ENCODE measurements at regions of chr6 and their contacts with region 1.

Region 1: DNA sequence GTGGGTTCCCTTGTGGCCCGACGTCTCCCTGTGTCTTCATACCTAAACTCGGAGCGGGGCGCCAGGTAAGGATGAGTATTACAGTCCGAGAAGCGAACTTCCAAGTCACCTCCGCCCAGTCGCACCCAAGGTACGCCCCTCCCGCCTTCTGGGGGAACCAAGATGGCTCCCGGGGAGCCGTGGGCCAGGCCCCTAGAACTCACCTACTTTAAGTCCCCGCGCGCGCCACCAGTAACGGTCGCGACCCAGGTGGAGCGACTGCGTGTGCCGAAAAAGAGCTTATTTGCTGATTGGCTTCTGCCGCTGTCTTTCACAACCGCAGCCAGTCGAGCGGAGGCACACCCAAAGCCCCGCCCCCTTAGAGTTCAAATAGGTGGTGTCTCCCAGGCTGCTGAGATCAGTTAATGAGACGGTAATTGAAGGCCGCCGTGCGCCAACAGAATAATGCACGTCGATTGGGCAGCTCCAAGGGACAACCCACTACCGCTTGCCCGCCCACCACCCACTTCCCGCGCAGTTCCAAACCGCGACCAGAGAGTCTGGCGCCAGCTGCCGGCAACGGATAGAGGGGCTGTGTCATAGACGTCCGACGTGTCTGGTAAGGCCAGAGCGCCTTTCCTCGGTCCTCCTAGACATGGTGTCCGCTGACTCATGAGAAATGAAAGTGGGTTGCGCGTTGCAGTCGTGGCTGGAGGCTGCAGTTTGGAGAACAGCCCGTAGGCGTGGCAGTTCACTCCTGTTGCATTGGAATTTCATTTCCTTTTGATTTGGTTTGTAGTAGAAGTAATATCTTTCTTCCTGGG is at the start of gene MDC1:
- DNase-seq: peak; percentile 84 to 100
- ATAC-seq: peak; percentile 83 to 87
- H3K4me3 ChIP-seq: peak within 1 kb of the TSS; percentile 63
- H3K27ac ChIP-seq: peak within 1 kb of the TSS; percentile 99 to 100
- H3K4me1 ChIP-seq: peaks cover 22% of the 10 kb centered on the region
- CTCF ChIP-seq: no peak
- EP300 ChIP-seq: no peak
- POLR2A ChIP-seq: 0 out of 2 replicates have a peak, but pooled peaks have one; percentile 32
- RAD21 ChIP-seq: no peak; a peak in 1 of 5 replicates
- polyA plus RNA-seq, gene MDC1: 8.2 and 13.3 TPM in 2 replicates

Region 2: DNA sequence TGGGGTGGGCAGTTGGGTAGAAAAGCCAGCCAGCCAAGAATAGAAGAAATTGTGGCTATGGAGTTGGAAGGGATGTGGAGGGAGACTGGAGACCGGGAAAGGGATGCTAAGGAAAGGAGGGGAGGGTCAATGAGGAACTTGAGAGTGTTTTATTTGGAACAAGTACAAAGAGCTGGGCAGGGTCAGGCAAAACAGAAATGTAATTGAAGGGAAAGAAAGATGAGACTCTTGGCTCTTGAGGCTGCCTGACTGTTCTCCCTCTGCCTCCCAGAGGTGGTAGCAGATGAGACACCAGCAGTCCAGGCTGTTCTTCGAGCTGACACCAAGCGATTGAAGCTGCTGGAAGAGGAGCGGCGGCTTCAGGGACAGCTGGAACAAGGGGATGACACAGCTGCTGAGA is 133.3 kb before region 1 on chr6:
- CTCF ChIA-PET with region 1: no interaction called
- POLR2A ChIA-PET with region 1: no interaction called
- DNase-seq: no peak
- ATAC-seq: no peak; a peak in 1 of 6 replicates
- H3K4me3 ChIP-seq: no peak overlapping the region
- H3K27ac ChIP-seq: no peak overlapping the region
- H3K4me1 ChIP-seq: no peaks in the 10 kb centered on the region
- CTCF ChIP-seq: no peak
- EP300 ChIP-seq: no peak
- POLR2A ChIP-seq: no peak
- RAD21 ChIP-seq: no peak

Region 3: GRCh38 chr6:30664994-30665767 is 52.1 kb before region 1 on chr6:
- CTCF ChIA-PET with region 1: interaction called, 539 read pairs
- POLR2A ChIA-PET with region 1: no interaction called
- DNase-seq: no peak
- ATAC-seq: no peak
- H3K4me3 ChIP-seq: no peak overlapping the region
- H3K27ac ChIP-seq: no peak overlapping the region
- H3K4me1 ChIP-seq: no peaks in the 10 kb centered on the region
- CTCF ChIP-seq: no peak
- EP300 ChIP-seq: no peak
- POLR2A ChIP-seq: no peak
- RAD21 ChIP-seq: no peak

Region 4: DNA sequence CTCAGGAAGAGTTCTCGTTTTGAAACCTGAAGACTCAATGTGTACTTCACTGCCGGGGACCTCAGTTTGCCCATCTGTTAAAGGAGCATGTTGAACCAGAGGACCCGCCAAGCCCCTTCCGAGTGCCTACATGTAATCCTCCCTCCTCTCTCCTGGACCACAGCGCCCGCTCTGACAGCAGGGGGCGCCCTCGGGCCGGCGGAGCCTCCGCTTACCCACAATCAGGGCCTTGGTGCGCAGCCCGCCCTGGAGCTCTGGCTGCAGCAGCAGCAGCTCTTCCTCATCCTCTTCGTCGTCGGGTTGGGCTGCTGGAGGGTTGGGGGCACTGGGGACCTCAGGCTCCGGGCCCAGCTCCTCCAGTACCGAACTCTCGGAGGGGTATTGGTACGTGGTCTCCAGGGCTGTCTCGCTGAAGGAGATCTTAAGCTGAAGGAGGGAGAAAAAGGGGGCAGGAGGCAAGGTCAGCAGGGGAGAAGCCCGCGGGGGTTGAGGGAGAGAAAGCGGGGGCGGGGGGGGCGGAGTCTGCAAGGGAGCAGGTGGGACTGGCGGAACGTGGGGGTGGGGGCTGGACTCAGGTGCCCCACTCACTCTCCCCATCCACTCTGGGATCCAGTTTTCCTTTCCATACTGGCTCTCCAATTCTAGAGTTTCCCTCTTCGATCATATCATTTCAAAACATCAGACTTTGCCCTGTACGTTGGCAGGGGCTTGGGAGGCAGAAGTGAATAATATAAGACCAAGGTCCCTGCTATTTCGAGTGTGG is 38.1 kb before region 1 on chr6:
- CTCF ChIA-PET with region 1: interaction called, 539 read pairs
- POLR2A ChIA-PET with region 1: interaction called, 12 read pairs
- DNase-seq: peak; percentile 67 to 76
- ATAC-seq: peak; percentile 80 to 88; a peak in 5 of 6 replicates
- H3K4me3 ChIP-seq: 0 out of 3 replicates have a peak overlapping the region, but pooled peaks have one; percentile 19
- H3K27ac ChIP-seq: peak overlapping the region; percentile 59 to 87
- H3K4me1 ChIP-seq: peaks cover 37% of the 10 kb centered on the region
- CTCF ChIP-seq: peak; percentile 85
- EP300 ChIP-seq: no peak
- POLR2A ChIP-seq: no peak
- RAD21 ChIP-seq: peak; percentile 89 to 90

Region 5: GRCh38 chr6:30730601-30731435 is 13.6 kb after region 1 on chr6:
- CTCF ChIA-PET with region 1: interaction called, 53 read pairs
- POLR2A ChIA-PET with region 1: interaction called, 3 read pairs
- DNase-seq: peak in 1 of 2 experiments; percentile 74
- ATAC-seq: peak; percentile 63 to 65
- H3K4me3 ChIP-seq: no peak overlapping the region
- H3K27ac ChIP-seq: peak overlapping the region in 1 of 2 experiments; percentile 64; a peak in 3 of 6 replicates
- H3K4me1 ChIP-seq: peaks cover 28% of the 10 kb centered on the region; the same call in 2 of the 3 replicates
- CTCF ChIP-seq: peak; percentile 47; the same call in 2 of the 3 replicates
- EP300 ChIP-seq: no peak
- POLR2A ChIP-seq: no peak
- RAD21 ChIP-seq: peak; percentile 67 to 70

Region 6: DNA sequence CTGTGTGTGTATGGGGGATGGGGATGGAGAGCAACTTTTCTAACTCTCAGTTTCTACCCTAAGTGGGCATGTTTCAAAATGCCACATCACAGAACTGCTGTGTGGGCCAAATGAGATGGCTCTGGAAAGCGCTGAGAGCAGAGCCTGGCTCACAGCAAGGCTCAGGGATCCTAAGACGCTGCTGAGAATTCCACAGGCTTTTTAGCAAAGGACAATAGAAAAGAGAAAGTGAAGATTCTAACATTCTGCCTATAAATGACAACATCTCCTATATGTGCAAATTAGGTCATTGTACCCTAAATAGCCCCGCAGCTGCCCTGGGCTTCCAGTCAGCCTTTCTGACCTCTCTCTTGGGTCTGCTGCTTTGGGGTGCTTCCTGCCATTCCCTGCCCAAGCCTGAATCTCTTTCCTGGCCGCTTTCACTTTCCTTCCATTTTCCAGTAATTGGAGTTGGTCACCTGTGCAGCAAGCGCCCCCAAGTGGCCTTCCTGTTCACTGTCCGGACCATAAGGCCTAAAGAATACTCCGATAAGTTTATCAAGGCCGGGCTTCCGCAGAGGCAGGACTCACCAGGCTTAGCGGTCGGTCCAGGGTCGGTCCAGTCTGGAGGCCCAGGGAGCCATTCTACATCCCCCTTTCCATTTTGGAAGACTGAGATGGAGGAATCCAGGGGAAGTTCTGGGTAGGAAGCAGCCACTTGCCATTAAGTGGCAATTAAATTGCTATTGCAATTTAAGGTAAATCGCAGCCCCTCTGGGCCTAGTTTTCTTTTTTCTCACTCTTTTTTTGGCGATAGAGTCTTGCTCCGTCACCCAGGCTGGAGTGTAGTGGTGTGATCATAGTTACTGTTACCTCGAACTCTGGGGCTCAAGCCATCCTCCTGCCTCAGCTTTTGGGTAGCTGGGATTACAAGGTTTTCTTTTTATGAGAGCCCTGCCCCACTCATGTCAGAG is 160.5 kb after region 1 on chr6:
- CTCF ChIA-PET with region 1: interaction called, 12 read pairs
- POLR2A ChIA-PET with region 1: no interaction called
- DNase-seq: peak; percentile 76 to 88
- ATAC-seq: peak; percentile 88 to 94
- H3K4me3 ChIP-seq: peak overlapping the region; percentile 14; the same call in 1 of the 3 replicates
- H3K27ac ChIP-seq: peak overlapping the region; percentile 79 to 91
- H3K4me1 ChIP-seq: peaks cover 15% of the 10 kb centered on the region
- CTCF ChIP-seq: peak; percentile 82
- EP300 ChIP-seq: no peak
- POLR2A ChIP-seq: no peak
- RAD21 ChIP-seq: peak; percentile 93 to 94